Activated T-helper 1 cell treated with anti-CD3 and anti-CD28 coated beads, Interleukin-12 subunit alpha, Interleukin-12 subunit beta, Interleukin-2, Interleukin-4 antibody, amounts not matched to agents 30 ng/mL and 10 ng/mL and 1 ng/mL, durations not matched to agents 14 hours and 24 hours and 36 hours (primary cell): ENCODE measurements at regions of chr15 and their contacts with region 1.

Region 1: DNA sequence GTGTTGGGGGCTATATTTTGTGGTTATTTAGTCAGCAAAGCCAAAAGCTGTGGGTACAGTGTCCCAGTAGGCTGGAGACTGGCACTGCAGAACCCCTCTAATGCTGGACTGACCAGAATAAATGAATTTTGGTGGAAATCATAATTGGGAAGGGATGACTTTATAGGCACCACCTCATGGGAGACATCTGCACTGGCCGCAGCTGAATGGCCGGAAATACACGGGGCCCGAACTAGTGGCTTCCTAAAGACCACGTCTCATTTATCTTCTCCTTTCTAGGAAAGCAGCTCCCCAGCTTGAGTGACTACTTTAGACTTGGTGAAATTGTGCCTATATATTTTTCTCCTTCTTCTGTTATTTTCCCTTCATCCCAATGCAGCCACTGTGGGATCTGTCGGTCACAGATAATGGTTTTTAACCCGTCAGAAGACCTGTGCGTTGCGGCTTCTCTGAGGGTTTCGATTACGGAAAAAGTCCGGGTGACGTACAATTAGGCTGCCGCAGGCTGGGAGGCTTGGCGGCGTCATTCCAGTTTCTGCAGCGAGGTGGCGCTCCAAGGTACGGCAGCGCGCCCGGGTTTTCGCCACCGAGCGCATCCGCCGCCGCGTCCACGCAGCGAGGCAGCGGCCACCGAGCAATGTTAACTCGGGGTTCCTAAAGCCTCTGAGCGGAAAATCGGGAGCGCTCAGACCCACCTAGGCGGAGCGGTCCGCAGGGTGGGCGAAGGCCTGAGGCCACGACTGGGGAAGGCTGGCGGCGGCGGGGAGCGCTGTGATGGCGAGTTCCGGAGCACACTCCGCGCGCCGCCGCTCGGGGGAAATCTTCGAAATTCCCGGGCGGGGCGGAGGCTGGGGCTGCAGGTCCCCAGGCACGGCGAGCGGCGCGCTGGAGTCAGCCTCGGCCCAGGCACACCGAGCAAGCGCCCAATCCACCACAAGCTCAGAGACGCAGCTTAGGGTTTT is 26.3 kb downstream of the NR2F2 start:
- DNase-seq: peak; percentile 68
- H3K4me3 Mint-ChIP-seq: peak overlapping the region; percentile 83
- H3K27ac Mint-ChIP-seq: peak overlapping the region; percentile 63
- H3K4me1 Mint-ChIP-seq: peaks cover 16% of the 10 kb centered on the region
- H3K27me3 Mint-ChIP-seq: peaks cover 56% of the 10 kb centered on the region

Region 2: DNA sequence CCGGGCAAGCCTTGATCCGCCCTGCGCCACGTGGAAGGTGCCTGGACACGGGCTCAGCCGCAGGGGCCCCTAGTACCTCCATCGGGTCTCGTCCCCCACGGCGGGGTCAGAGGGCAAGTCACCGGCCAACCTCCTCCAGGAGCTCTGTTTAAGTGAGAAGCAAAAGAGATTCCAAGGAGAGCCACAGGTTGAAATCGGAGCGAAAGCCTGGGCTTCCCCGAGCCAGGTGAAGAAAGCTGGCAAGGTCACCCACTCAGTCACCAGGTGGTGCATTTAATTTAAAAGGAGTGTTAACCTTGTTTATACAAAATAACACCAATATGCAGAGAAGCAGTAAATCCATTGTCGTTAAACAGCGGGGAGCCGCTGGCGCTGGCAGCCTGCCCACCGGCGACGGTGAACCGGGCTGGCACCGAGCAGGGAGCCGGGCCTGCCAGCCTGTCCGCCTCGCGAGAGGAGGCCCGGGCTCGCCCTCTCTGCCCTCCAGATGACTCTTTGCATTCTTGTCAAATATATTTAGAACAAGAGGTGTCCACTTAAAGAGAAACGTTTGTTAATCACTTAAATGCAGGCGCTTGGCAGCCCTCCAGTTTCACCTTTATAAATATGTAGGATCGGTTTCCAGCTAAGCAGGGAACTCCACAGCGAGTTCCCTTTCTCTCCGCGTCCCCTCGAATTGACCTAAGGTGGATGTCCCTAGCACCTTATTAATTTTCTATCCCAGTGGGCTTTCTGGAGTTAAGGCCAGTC is 303.6 kb before region 1 on chr15:
- intact Hi-C with region 1: loop called (anchors 10 kb)
- DNase-seq: no peak
- H3K4me3 Mint-ChIP-seq: no peak overlapping the region
- H3K27ac Mint-ChIP-seq: no peak overlapping the region
- H3K4me1 Mint-ChIP-seq: peaks cover 5% of the 10 kb centered on the region
- H3K27me3 Mint-ChIP-seq: peaks cover 57% of the 10 kb centered on the region

Region 3: GRCh38 chr15:96170979-96171739 is 185.6 kb before region 1 on chr15:
- intact Hi-C with region 1: no loop called
- DNase-seq: no peak
- H3K4me3 Mint-ChIP-seq: no peak overlapping the region
- H3K27ac Mint-ChIP-seq: no peak overlapping the region
- H3K4me1 Mint-ChIP-seq: no peaks in the 10 kb centered on the region
- H3K27me3 Mint-ChIP-seq: peaks cover 2% of the 10 kb centered on the region

Region 4: GRCh38 chr15:96345560-96346399 is 11.0 kb before region 1 on chr15:
- intact Hi-C with region 1: loop called (anchors 2 kb)
- DNase-seq: no peak
- H3K4me3 Mint-ChIP-seq: peak overlapping the region; percentile 0
- H3K27ac Mint-ChIP-seq: peak overlapping the region; percentile 31
- H3K4me1 Mint-ChIP-seq: peaks cover 4% of the 10 kb centered on the region
- H3K27me3 Mint-ChIP-seq: peaks cover 87% of the 10 kb centered on the region

Region 5: GRCh38 chr15:96585484-96586386 is 229.0 kb after region 1 on chr15:
- intact Hi-C with region 1: loop called (anchors 5 kb)
- DNase-seq: no peak
- H3K4me3 Mint-ChIP-seq: no peak overlapping the region
- H3K27ac Mint-ChIP-seq: no peak overlapping the region
- H3K4me1 Mint-ChIP-seq: no peaks in the 10 kb centered on the region
- H3K27me3 Mint-ChIP-seq: no peaks in the 10 kb centered on the region

Region 6: GRCh38 chr15:96619174-96619573 is 262.4 kb after region 1 on chr15:
- intact Hi-C with region 1: no loop called
- DNase-seq: no peak
- H3K4me3 Mint-ChIP-seq: no peak overlapping the region
- H3K27ac Mint-ChIP-seq: no peak overlapping the region
- H3K4me1 Mint-ChIP-seq: no peaks in the 10 kb centered on the region
- H3K27me3 Mint-ChIP-seq: no peaks in the 10 kb centered on the region

Region 7: GRCh38 chr15:96893159-96893906 is 536.6 kb after region 1 on chr15:
- intact Hi-C with region 1: loop called (anchors 10 kb)
- DNase-seq: no peak
- H3K4me3 Mint-ChIP-seq: no peak overlapping the region
- H3K27ac Mint-ChIP-seq: no peak overlapping the region
- H3K4me1 Mint-ChIP-seq: peaks cover 6% of the 10 kb centered on the region
- H3K27me3 Mint-ChIP-seq: no peaks in the 10 kb centered on the region

Region 8: GRCh38 chr15:97234851-97235610 is 878.3 kb after region 1 on chr15:
- intact Hi-C with region 1: loop called (anchors 5 kb)
- DNase-seq: no peak
- H3K4me3 Mint-ChIP-seq: no peak overlapping the region
- H3K27ac Mint-ChIP-seq: no peak overlapping the region
- H3K4me1 Mint-ChIP-seq: peaks cover 5% of the 10 kb centered on the region
- H3K27me3 Mint-ChIP-seq: no peaks in the 10 kb centered on the region